Psoas muscle (tissue), 8 donors: ENCODE measurements at regions of chr13 and their contacts with region 1.

Region 1: DNA sequence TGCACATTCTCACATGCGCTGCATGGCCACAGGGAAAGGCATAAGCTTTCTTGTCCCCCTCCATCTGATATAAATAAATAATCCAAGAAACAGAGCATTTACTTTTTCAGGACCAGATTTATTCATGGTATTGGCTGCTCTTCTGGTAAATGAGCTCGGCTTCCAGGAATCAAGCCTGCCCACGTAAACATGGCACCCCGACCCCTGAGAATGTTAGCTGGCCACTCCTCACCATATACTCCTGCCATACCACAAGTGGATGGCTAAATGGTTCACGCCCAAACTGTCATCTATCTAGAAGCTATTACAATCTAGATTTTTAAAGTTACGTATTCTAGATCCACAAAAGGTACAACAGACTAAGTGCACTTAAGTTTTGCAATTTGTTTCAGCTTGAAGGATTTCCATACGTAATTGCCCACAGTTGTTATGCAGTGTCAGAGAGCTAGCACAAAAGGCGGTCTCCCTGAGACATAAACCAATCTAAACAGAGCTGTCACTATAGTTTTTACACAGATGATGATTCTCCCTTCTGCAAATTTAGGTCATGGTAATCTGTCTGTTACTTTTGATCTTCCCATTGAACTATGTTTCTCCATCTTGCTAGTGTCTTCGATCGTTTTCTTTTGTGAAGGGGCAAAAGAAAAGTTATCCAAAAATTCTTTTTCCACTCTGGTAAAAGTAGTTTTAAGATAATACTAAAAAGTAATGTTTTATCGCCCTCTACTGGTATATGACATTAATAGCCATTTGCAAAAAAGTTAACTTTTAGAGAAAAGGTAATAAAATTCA is 16.2 kb upstream of the FOXO1 start:
- DNase-seq: no peak
- ATAC-seq: peak in 3 of 4 donors; percentile 23 to 55 (median 32)
- H3K4me3 ChIP-seq: no peak overlapping the region
- H3K27ac ChIP-seq: no peak overlapping the region
- H3K4me1 ChIP-seq: peaks cover 25% of the 10 kb centered on the region
- H3K27me3 ChIP-seq: no peaks in the 10 kb centered on the region
- CTCF ChIP-seq: peak; percentile 74

Region 2: GRCh38 chr13:39684531-39685137 is 998.0 kb before region 1 on chr13:
- intact Hi-C with region 1: loop called (anchors 5 kb)
- DNase-seq: no peak
- ATAC-seq: no peak
- H3K4me3 ChIP-seq: no peak overlapping the region
- H3K27ac ChIP-seq: no peak overlapping the region
- H3K4me1 ChIP-seq: no peaks in the 10 kb centered on the region
- H3K27me3 ChIP-seq: no peaks in the 10 kb centered on the region
- CTCF ChIP-seq: peak; percentile 50

Region 3: GRCh38 chr13:39779337-39780265 is 903.0 kb before region 1 on chr13:
- intact Hi-C with region 1: loop called in 1 of 2 experiments (anchors 10 kb)
- DNase-seq: no peak
- ATAC-seq: no peak
- H3K4me3 ChIP-seq: no peak overlapping the region
- H3K27ac ChIP-seq: no peak overlapping the region
- H3K4me1 ChIP-seq: no peaks in the 10 kb centered on the region
- H3K27me3 ChIP-seq: no peaks in the 10 kb centered on the region
- CTCF ChIP-seq: no peak

Region 4: GRCh38 chr13:39942552-39943273 is 739.9 kb before region 1 on chr13:
- intact Hi-C with region 1: loop called (anchors 5 kb)
- DNase-seq: peak; percentile 58 to 73
- ATAC-seq: peak; percentile 80 to 99 (median 96)
- H3K4me3 ChIP-seq: no peak overlapping the region
- H3K27ac ChIP-seq: no peak overlapping the region
- H3K4me1 ChIP-seq: no peaks in the 10 kb centered on the region
- H3K27me3 ChIP-seq: no peaks in the 10 kb centered on the region
- CTCF ChIP-seq: peak; percentile 86

Region 5: GRCh38 chr13:40315416-40316064 is 367.1 kb before region 1 on chr13:
- intact Hi-C with region 1: no loop called
- DNase-seq: peak in 1 of 2 donors; percentile 25
- ATAC-seq: peak in 3 of 4 donors; percentile 23 to 37 (median 31)
- H3K4me3 ChIP-seq: no peak overlapping the region
- H3K27ac ChIP-seq: no peak overlapping the region
- H3K4me1 ChIP-seq: peaks cover 11% of the 10 kb centered on the region
- H3K27me3 ChIP-seq: no peaks in the 10 kb centered on the region
- CTCF ChIP-seq: no peak

Region 6: DNA sequence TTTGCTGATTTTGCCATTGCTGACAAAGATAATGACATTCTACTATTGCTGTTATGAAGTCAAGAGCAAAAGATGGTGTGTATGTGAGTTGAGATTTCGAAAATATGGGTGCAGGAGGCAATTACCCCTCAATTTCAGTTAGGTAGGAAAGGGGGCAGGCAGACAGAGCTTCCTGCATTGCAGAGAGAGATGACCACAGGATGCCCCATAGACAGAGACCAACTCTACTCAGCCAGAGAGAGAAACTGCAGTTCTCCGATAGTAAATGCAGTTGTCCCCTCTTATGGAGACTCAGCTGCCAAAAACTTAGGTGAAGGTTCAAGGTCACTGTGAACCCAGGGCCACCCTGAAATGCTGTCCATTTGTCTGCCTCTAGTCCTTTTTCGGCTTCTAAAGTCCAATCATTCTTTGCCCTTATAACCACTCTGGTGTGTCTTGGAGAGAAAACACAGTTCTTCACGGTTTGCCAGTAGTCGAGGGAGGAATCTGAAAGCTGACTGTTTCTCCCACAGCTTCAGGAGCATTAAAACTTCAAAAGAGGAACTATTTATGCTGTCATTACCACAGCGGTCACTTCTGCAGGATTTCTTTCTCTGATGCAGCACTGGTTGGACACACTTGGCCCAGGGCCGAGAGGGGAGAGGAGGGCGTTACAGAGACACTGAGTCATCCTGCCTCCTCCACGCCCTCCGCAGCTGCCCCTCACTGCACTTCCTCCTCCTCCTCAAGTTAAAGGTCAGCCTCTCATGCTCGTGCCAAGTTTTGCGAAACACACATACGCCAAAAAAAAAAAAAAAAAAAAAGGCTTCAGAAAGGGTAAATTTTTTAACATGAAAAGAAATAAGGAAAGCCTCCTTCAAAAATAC is 280.5 kb before region 1 on chr13:
- intact Hi-C with region 1: loop called in 1 of 2 experiments (anchors 5 kb)
- DNase-seq: peak; percentile 98
- ATAC-seq: peak; percentile 89 to 95 (median 92)
- H3K4me3 ChIP-seq: peak overlapping the region; percentile 37
- H3K27ac ChIP-seq: peak overlapping the region; percentile 50
- H3K4me1 ChIP-seq: peaks cover 32% of the 10 kb centered on the region
- H3K27me3 ChIP-seq: no peaks in the 10 kb centered on the region
- CTCF ChIP-seq: no peak

Region 7: GRCh38 chr13:40596484-40596883 is 86.2 kb before region 1 on chr13:
- intact Hi-C with region 1: no loop called
- DNase-seq: no peak
- ATAC-seq: peak; percentile 23 to 73 (median 72)
- H3K4me3 ChIP-seq: no peak overlapping the region
- H3K27ac ChIP-seq: peak overlapping the region; percentile 90
- H3K4me1 ChIP-seq: peaks cover 93% of the 10 kb centered on the region
- H3K27me3 ChIP-seq: no peaks in the 10 kb centered on the region
- CTCF ChIP-seq: no peak